CD4-positive, alpha-beta memory T cell (primary cell): ENCODE measurements at regions of chr4 and their contacts with region 1.

Region 1: GRCh38 chr4:6673660-6674499 is 19.8 kb upstream of the S100P start:
- DNase-seq: peak; percentile 94 to 96 (median 96)
- H3K4me3 ChIP-seq: peak overlapping the region; percentile 59 to 65
- H3K4me3 Mint-ChIP-seq: peak overlapping the region; percentile 92 to 99 (median 98)
- H3K27ac ChIP-seq: peak overlapping the region; percentile 71
- H3K27ac Mint-ChIP-seq: peak overlapping the region; percentile 95 to 99 (median 98)
- H3K4me1 ChIP-seq: peaks cover 36% of the 10 kb centered on the region
- H3K4me1 Mint-ChIP-seq: peaks cover 39 to 59% (median 49%) of the 10 kb centered on the region in 4 donors
- H3K27me3 ChIP-seq: no peaks in the 10 kb centered on the region
- H3K27me3 Mint-ChIP-seq: no peaks in the 10 kb centered on the region

Region 2: DNA sequence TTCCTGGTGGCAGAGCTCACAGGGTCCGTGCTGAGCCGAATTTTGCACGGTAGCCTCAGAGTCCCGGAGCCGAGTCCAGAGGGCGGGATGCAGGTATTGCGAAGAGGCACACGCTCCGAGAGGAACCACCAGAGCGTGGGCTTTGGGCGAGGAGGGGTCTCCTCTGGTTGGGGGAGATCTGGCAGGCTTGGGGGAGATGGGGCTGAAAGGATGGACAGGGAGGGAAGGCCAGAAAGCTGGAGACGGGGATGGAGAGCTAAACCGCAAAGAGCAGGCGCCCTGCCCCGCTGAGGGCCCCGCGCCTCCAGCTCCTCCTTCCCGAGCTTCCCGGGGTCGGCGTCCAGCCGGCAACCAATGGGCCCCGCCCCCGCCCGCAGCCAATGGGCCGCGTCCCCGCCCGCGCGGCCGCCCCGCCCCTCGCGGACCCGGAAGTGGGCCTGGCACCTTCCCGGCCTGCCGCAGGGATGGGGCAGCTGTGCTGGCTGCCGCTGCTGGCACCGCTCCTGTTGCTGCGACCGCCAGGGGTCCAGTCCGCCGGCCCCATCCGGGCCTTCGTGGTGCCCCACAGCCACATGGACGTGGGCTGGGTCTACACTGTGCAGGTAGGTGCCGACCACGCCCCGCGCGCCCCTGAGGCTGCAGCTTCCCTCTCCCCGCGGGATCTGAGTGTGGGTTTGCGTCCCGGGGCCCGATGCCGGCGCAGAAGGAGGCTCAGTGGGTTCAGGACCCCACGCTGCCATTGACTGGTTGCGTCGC is 99.0 kb before region 1 on chr4 and contains the start of gene MAN2B2:
- CTCF ChIA-PET with region 1: interaction called, 3 read pairs
- POLR2A ChIA-PET with region 1: interaction called, 15 read pairs
- intact Hi-C with region 1: no loop called
- DNase-seq: peak; percentile 76 to 83 (median 77)
- H3K4me3 ChIP-seq: peak within 1 kb of the TSS; percentile 84 to 97
- H3K4me3 Mint-ChIP-seq: peak within 1 kb of the TSS; percentile 88 to 95 (median 90)
- H3K27ac ChIP-seq: peak within 1 kb of the TSS; percentile 77
- H3K27ac Mint-ChIP-seq: peak within 1 kb of the TSS; percentile 83 to 91 (median 88)
- H3K4me1 ChIP-seq: peaks cover 26% of the 10 kb centered on the region
- H3K4me1 Mint-ChIP-seq: peaks cover 9 to 34% (median 12%) of the 10 kb centered on the region in 4 donors
- H3K27me3 ChIP-seq: no peaks in the 10 kb centered on the region
- H3K27me3 Mint-ChIP-seq: no peaks in the 10 kb centered on the region
- total RNA-seq, gene MAN2B2: 51.5 to 53.2 TPM

Region 3: GRCh38 chr4:6663596-6664393 is 10.1 kb before region 1 on chr4:
- CTCF ChIA-PET with region 1: interaction called, 10 read pairs
- POLR2A ChIA-PET with region 1: interaction called, 44 read pairs
- intact Hi-C with region 1: loop called (anchors 1 kb)
- DNase-seq: no peak
- H3K4me3 ChIP-seq: peak overlapping the region in 1 of 2 donors; percentile 19
- H3K4me3 Mint-ChIP-seq: peak overlapping the region in 6 of 8 donors; percentile 6 to 72 (median 45)
- H3K27ac ChIP-seq: no peak overlapping the region
- H3K27ac Mint-ChIP-seq: no peak overlapping the region
- H3K4me1 ChIP-seq: peaks cover 19% of the 10 kb centered on the region
- H3K4me1 Mint-ChIP-seq: peaks cover 0 to 15% (median 7%) of the 10 kb centered on the region in 4 donors
- H3K27me3 ChIP-seq: no peaks in the 10 kb centered on the region
- H3K27me3 Mint-ChIP-seq: no peaks in the 10 kb centered on the region

Region 4: GRCh38 chr4:6695660-6696630 is 22.1 kb after region 1 on chr4:
- CTCF ChIA-PET with region 1: interaction called, 189 read pairs
- POLR2A ChIA-PET with region 1: interaction called, 1,401 read pairs
- intact Hi-C with region 1: loop called (anchors 1 kb)
- DNase-seq: peak; percentile 78 to 89 (median 81)
- H3K4me3 ChIP-seq: no peak overlapping the region
- H3K4me3 Mint-ChIP-seq: peak overlapping the region; percentile 33 to 85 (median 71)
- H3K27ac ChIP-seq: peak overlapping the region; percentile 81
- H3K27ac Mint-ChIP-seq: peak overlapping the region; percentile 89 to 96 (median 92)
- H3K4me1 ChIP-seq: peaks cover 98% of the 10 kb centered on the region
- H3K4me1 Mint-ChIP-seq: peaks cover 59 to 92% (median 78%) of the 10 kb centered on the region in 4 donors
- H3K27me3 ChIP-seq: no peaks in the 10 kb centered on the region
- H3K27me3 Mint-ChIP-seq: no peaks in the 10 kb centered on the region

Region 5: GRCh38 chr4:6709230-6710114 is 35.6 kb after region 1 on chr4 and contains the start of gene MRFAP1L1:
- CTCF ChIA-PET with region 1: interaction called, 189 read pairs
- POLR2A ChIA-PET with region 1: interaction called, 1,401 read pairs
- intact Hi-C with region 1: loop called (anchors 1 kb)
- DNase-seq: peak; percentile 96 to 98 (median 97)
- H3K4me3 ChIP-seq: peak within 1 kb of the TSS; percentile 74 to 84
- H3K4me3 Mint-ChIP-seq: peak within 1 kb of the TSS; percentile 97 to 100 (median 99)
- H3K27ac ChIP-seq: peak within 1 kb of the TSS; percentile 95
- H3K27ac Mint-ChIP-seq: peak within 1 kb of the TSS; percentile 99 to 100 (median 99)
- H3K4me1 ChIP-seq: peaks cover 51% of the 10 kb centered on the region
- H3K4me1 Mint-ChIP-seq: peaks cover 44 to 71% (median 55%) of the 10 kb centered on the region in 4 donors
- H3K27me3 ChIP-seq: no peaks in the 10 kb centered on the region
- H3K27me3 Mint-ChIP-seq: no peaks in the 10 kb centered on the region
- total RNA-seq, gene MRFAP1L1: 127 to 134 TPM

Region 6: DNA sequence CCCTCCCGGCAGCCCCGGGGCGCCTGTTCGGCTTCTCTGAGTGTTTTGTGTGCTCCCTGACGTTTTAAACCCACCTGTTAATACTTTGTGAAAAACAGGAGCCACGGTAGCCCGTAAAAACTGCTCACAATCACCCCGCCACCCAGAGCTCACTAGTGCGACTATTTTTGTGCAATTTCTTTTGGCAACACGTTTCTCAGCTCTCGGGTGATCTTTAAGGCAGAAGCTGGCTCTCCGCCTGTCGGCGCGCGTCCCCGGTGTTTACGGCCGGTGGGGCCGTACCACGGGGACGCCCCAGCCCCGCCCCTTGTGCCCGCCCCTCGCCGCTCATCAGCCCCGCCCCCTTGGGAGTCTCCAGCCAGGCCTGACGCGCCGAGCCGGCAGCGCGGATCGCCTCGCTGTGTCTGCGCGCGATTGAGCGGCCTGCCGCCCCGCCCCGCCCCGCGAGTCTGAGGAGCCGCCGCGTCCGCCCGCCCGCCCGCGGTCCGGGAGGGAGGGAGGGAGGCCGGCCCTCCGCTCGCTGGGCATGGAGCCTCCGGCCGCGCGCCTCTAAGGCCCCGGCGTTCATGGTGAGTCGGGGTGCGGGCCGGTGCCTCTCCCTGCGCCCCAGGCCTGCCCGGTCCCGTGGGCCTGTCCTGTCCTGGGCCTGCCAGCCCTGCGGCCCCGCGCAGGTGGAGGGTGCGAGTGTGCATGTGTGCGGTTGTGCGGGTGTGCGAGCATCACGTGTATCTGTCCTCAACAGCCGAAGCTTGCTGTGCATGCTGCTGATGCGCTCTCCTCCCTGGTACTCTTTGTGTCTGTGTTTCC is 313.1 kb after region 1 on chr4:
- CTCF ChIA-PET with region 1: no interaction called
- POLR2A ChIA-PET with region 1: interaction called, 7 read pairs
- intact Hi-C with region 1: loop called (anchors 2 kb)
- DNase-seq: peak; percentile 90 to 93 (median 92)
- H3K4me3 ChIP-seq: peak overlapping the region; percentile 65 to 83
- H3K4me3 Mint-ChIP-seq: peak overlapping the region; percentile 94 to 99 (median 95)
- H3K27ac ChIP-seq: peak overlapping the region; percentile 90
- H3K27ac Mint-ChIP-seq: peak overlapping the region; percentile 95 to 98 (median 96)
- H3K4me1 ChIP-seq: peaks cover 78% of the 10 kb centered on the region
- H3K4me1 Mint-ChIP-seq: peaks cover 57 to 86% (median 70%) of the 10 kb centered on the region in 4 donors
- H3K27me3 ChIP-seq: no peaks in the 10 kb centered on the region
- H3K27me3 Mint-ChIP-seq: no peaks in the 10 kb centered on the region